Activated CD8-positive, alpha-beta T cell treated with anti-CD3 and anti-CD28 coated beads for 36 hours (primary cell): ENCODE measurements at regions of chr1 and their contacts with region 1.

Region 1: DNA sequence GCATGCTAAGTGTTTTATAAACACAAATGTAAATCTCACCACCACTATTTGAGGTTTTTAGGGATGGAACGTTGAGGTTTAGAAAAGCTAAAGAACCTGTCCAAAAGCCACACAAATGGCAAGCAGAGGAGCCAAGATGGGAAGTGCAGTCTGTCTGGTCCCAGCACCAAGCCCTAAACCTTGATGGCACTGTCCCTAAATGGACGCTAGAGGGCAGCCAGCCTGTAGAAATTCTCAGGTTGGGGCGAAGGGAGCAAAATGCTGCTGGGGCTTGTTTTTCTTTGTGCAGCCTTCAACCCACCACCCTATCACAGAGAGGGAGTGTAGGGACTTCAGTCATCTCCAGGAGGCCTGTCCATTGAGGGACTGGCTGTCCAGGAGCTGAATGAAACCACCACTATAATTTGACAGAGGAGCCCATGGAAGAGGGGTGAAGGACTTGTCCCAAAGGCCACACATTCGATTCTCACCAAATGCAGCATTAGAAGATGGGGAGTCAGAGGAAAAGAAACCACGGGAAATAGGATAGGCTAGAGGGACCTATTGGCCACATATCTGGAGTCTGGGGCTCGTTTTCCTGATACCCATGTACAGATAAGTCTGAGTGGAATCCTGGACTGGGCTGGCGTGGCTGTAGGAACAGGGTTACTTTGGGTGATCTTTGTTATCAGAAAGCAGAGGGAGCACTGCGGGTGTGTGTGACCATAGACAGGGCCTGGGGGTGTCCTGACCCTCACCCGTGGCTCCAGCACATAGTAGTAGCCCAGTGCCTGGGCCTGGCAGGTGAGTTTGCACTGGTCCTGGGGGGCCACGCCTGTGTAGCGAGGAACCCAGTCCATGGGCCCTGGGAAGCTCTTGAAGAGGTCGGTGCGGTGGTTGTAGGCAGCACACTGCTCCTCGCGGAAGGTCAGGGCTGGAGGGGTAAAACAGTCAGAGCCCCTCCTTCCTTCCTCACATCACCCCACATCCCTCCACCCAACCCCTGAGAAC is 6.1 kb downstream of the ADAMTS4 start:
- DNase-seq: peak; percentile 81
- ATAC-seq: peak; percentile 95
- H3K4me3 Mint-ChIP-seq: no peak overlapping the region
- H3K27ac Mint-ChIP-seq: peak overlapping the region; percentile 78
- H3K4me1 Mint-ChIP-seq: peaks cover 23% of the 10 kb centered on the region
- H3K27me3 Mint-ChIP-seq: no peaks in the 10 kb centered on the region
- CTCF ChIP-seq: peak; percentile 92

Region 2: DNA sequence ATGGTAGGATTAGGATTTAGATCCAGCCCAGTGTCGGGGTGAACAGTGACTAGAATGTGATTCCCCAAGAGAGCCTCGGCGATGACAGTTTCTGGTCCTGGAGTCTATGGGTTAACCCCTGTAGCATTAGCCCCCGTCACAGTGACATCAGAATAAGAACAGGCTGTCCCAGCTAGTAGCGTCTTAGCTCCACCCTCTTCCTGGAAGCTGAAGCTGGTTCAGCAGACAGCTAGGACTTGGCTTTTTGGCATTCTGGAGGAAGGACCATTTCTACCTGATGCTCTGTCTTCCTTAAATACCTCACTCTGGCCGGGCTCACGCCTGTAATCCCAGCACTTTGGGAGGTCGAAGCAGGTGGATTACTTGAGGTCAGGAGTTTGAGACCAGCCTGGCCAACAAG is 14.4 kb after region 1 on chr1:
- CTCF ChIA-PET with region 1: interaction called, 76 read pairs
- POLR2A ChIA-PET with region 1: interaction called, 29 read pairs
- intact Hi-C with region 1: no loop called
- DNase-seq: no peak
- ATAC-seq: no peak
- H3K4me3 Mint-ChIP-seq: no peak overlapping the region
- H3K27ac Mint-ChIP-seq: no peak overlapping the region
- H3K4me1 Mint-ChIP-seq: peaks cover 43% of the 10 kb centered on the region
- H3K27me3 Mint-ChIP-seq: no peaks in the 10 kb centered on the region
- CTCF ChIP-seq: no peak

Region 3: DNA sequence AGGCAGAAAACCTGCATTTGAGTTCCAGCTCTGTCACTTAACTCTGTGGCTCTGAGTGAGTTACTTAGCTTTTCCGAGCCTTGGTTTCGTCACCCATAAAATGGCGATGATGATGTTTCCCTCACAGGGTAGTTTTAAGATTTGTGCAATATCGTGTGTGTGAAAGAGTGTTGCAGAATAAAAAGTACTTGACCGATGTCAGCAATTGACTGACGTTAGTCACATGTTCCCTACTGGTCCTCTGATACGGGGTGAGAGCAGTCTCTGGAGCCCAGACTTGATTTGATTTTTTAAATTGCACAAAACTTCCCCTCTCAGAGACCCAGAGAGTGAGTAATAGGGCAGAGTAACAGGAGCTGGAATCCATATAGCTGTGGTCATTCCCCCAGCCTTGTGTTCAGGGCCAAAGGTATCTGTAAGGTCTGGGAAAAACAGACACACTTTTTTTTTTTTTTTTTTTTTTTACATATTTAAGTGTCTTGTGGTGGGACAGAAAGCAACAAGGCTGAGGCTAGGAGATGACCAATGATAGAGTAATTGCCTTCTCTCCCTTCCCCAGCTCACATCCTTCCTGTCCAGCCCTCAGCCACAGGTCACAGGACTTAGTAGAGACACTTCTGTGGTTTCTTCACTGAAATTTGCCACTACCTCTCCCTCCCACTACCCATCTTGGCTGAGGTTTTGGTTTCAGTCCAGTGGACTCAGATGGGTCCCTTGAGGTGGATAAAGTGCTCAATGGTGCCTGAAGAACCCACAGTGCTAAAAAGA is 24.4 kb after region 1 on chr1:
- CTCF ChIA-PET with region 1: interaction called, 306 read pairs
- POLR2A ChIA-PET with region 1: no interaction called
- intact Hi-C with region 1: no loop called
- DNase-seq: no peak
- ATAC-seq: peak; percentile 70
- H3K4me3 Mint-ChIP-seq: no peak overlapping the region
- H3K27ac Mint-ChIP-seq: peak overlapping the region; percentile 76
- H3K4me1 Mint-ChIP-seq: peaks cover 54% of the 10 kb centered on the region
- H3K27me3 Mint-ChIP-seq: no peaks in the 10 kb centered on the region
- CTCF ChIP-seq: no peak

Region 4: DNA sequence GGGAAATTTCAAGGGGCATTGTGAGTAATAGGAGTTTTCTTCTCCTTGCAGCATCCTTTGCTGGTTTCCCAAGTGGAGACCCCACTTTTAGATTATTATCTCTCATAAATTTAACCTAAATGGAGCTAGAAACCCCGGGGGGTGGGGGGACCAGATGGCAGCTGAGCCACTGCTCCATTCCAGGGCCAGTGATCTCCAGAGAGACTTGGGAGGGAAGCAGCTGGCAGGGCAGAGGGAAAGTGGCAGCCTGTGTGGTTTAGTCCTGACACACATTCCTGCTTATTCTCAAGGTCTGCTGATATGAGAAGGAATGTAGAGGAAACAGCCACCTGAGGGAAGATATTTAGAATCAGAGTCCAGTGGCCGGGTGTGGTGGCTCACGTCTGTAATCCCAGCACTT is 82.1 kb after region 1 on chr1:
- CTCF ChIA-PET with region 1: no interaction called
- POLR2A ChIA-PET with region 1: no interaction called
- intact Hi-C with region 1: no loop called
- DNase-seq: no peak
- ATAC-seq: no peak
- H3K4me3 Mint-ChIP-seq: no peak overlapping the region
- H3K27ac Mint-ChIP-seq: no peak overlapping the region
- H3K4me1 Mint-ChIP-seq: no peaks in the 10 kb centered on the region
- H3K27me3 Mint-ChIP-seq: peaks cover 6% of the 10 kb centered on the region
- CTCF ChIP-seq: no peak

Region 5: DNA sequence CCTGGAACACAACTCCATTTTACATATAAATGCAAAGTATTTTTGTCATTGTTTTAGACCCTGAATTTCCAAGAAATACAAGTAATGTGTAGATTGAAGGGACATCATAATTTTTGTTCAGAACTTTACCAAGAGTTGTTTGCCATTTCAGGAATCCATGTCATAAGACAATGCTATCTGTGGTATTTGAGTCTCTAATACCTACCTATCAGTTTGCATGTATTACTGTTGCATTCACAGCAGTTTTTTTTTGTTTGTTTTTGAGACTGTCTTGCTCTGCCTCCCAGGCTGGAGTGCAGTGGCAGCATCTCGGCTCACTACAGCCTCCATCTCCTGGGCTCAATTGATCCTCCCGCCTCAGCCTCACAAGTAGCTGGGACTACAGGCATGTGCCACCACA is 99.9 kb after region 1 on chr1:
- CTCF ChIA-PET with region 1: interaction called, 21 read pairs
- POLR2A ChIA-PET with region 1: no interaction called
- intact Hi-C with region 1: no loop called
- DNase-seq: no peak
- ATAC-seq: no peak
- H3K4me3 Mint-ChIP-seq: no peak overlapping the region
- H3K27ac Mint-ChIP-seq: no peak overlapping the region
- H3K4me1 Mint-ChIP-seq: no peaks in the 10 kb centered on the region
- H3K27me3 Mint-ChIP-seq: no peaks in the 10 kb centered on the region
- CTCF ChIP-seq: no peak

Region 6: DNA sequence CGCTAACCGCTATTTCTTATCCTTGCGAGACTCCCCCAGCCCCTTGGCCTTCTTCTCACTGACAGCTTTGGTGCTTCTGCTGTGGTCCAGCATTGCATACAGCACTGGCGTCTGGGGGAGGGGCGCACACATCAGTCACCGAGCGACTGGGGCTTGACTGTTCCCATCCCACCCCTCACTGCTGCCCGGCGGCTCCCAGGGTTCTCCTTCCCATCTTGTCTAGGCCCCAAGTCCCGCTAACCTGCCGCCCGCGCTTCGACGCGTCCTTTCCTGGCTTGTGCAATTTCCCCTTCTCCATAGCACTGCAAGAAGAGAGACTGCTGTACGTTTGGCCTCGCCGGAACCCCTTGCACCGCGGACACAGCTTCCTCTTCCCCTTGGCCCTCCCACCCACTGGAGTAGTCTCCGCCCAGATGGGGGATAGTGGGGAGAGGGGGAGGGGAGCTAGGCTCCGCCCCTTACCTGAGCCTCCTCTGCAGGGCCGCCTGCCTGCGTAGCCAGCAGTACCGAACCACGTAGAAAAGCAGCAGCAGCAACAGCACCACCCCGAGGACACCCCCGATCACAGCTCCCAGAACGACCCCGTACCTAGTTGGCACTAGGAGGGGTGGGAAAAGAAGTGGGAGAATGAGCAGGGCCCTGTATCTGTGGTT is 113.2 kb after region 1 on chr1:
- CTCF ChIA-PET with region 1: interaction called, 11 read pairs
- POLR2A ChIA-PET with region 1: no interaction called
- intact Hi-C with region 1: loop called (anchors 10 kb)
- DNase-seq: peak; percentile 90
- ATAC-seq: peak; percentile 99
- H3K4me3 Mint-ChIP-seq: peak overlapping the region; percentile 87
- H3K27ac Mint-ChIP-seq: peak overlapping the region; percentile 84
- H3K4me1 Mint-ChIP-seq: peaks cover 31% of the 10 kb centered on the region
- H3K27me3 Mint-ChIP-seq: no peaks in the 10 kb centered on the region
- CTCF ChIP-seq: peak; percentile 53